ENCODE measurements at regions of chr10 and their contacts with region 1.

Region 1: DNA sequence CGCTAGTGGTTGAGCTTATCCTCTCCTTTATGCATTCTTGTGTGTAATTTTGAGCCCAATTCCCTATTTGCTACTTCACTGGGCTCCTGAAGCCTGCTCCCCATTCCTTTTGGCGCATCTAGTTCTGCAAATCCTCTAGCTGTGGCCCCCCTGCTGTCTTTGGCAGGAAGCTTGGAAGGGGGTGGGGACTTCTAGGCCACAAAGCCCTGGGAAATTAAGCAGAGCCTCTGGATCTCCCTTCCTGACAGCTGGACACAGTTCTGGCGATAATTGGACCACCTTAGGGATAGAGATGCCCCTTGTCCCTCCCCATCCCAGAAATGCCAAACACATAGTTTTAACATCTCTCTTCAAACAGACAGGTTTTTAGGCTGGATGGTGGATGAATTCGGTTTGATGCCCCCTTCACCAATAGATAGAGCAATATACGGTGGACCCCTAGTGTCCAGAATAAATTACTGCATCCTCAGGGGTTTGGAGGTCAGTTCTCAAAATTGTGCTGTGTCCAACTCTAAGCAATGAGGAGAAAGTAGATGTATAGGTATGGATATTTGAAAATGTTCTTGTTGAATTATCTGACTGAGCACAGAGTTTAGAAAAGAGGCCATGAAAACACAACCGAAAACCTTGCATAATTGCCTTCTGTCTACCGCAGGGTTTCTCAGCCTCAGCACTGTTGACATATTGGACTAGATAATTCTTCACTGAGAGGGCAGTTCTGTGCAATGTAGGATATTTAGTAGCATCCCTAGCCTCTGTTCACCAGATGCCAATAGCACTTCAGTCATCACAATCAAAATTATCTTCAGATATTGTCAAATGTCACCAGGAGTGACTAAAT is 75.5 kb downstream of the PAPSS2 start:
- DNase-seq: no peak
- H3K4me3 ChIP-seq: no peak overlapping the region
- H3K27ac ChIP-seq: no peak overlapping the region
- H3K4me1 ChIP-seq: peaks cover 3% of the 10 kb centered on the region
- H3K27me3 ChIP-seq: no peaks in the 10 kb centered on the region
- CTCF ChIP-seq: peak; percentile 62 to 68 (median 63)

Region 2: GRCh38 chr10:87552248-87552929 is 182.8 kb before region 1 on chr10:
- dilution Hi-C with region 1: loop called (anchors 10 kb)
- DNase-seq: no peak
- H3K4me3 ChIP-seq: no peak overlapping the region
- H3K27ac ChIP-seq: no peak overlapping the region
- H3K4me1 ChIP-seq: no peaks in the 10 kb centered on the region
- H3K27me3 ChIP-seq: no peaks in the 10 kb centered on the region
- CTCF ChIP-seq: no peak

Region 3: DNA sequence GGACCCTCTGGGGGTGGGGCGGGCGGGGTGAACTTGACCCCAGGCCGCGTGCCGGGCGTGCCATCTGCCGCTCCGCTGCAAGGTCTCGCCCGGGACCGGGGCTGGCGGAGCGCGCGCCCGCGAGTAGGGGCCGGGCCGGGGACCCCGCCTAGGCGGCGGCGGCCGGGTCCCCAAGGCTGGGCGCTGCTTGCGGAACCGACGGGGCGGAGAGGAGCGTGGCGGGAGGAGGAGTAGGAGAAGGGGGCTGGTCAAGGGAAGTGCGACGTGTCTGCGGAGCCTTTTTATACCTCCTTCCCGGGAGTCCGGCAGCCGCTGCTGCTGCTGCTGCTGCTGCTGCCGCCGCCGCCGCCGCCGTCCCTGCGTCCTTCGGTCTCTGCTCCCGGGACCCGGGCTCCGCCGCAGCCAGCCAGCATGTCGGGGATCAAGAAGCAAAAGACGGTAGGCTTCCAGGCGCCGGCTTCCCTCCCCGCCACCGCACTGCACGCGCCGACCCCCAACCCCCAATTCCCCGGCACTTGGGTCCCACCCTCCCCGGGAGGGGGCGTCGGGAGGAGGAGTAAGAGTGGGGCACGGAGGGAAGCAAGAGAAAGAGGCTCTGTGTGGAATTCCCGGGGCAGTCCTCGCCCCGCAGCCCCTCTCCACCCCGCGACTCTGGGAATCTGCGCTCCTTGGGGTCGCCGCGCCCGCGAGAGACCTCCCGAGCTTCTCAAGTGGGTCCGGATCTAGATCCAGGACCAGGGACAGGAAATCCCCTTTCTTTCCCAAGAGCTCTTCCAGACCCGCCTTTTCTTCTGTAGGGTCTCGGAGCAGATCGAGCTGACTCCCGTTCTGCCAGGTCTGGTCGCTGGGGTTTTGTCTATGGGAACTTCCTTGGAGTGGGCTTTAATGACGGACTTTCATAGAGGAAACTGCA is 75.4 kb before region 1 on chr10 and contains the start of gene PAPSS2:
- dilution Hi-C with region 1: loop called (anchors 5 kb)
- DNase-seq: no peak
- H3K4me3 ChIP-seq: peak within 1 kb of the TSS; percentile 49 to 76 (median 72)
- H3K27ac ChIP-seq: no peak within 1 kb of the TSS
- H3K4me1 ChIP-seq: peaks cover 2% of the 10 kb centered on the region
- H3K27me3 ChIP-seq: peaks cover 3% of the 10 kb centered on the region
- CTCF ChIP-seq: no peak
- polyA plus RNA-seq, gene PAPSS2: 1.1 to 1.7 TPM (median 1.1 TPM) in 3 replicates

Measured in keratinocyte (primary cell).